ENCODE measurements at regions of chr4 and their contacts with region 1.

Region 1: DNA sequence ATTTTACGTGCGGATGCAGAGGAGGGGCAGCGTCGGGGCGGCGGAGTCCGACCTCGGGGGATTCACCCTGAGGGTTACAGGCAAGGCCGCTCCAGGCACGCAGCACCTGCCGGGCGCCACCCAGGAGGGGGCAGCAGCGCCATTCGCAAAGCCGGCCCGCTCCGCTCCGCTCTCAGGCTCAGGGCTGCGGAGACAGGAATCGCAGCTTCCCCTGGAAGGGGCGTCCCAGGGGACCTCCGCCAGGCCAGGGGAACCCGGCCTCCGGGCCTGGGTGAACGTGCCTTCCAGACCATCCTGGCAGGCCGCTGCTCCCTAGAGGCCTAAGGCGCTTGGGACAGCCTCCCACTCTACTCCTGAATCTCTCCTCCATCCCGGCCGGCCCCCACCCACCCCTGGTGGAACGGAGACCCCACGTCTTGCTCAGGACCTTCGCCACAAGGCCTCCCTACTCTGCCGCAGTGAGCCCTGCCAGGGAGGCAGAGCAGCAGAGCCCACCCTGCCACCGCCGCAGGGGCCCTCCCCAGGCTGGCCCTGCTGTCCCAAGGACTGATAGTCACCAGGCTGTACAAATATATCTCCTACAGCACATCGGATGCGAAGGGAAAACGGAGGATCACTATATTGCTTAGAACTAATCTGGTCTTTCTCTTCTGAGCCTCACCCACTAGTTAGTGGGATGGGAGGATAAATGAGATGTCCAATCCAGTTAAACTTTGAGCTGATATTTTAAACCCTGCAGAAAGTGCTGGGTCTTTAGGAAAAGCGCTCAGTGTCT is 115.0 kb downstream of the SMIM20 start:
- DNase-seq: peak; percentile 74 to 91
- H3K4me3 ChIP-seq: peak overlapping the region; percentile 44 to 63 (median 52)
- H3K27ac ChIP-seq: peak overlapping the region; percentile 95
- H3K4me1 ChIP-seq: peaks cover 9 to 32% (median 20%) of the 10 kb centered on the region in 4 experiments
- H3K27me3 ChIP-seq: no peaks in the 10 kb centered on the region
- CTCF ChIP-seq: peak; percentile 74 to 88 (median 85)
- EP300 ChIP-seq: peak in 1 of 2 experiments; percentile 18; a peak in 1 of 3 replicates
- POLR2A ChIP-seq: peak; percentile 39 to 98
- RAD21 ChIP-seq: peak; percentile 90 to 92

Region 2: GRCh38 chr4:25783943-25784342 is 245.0 kb before region 1 on chr4:
- CTCF ChIA-PET with region 1: no interaction called
- POLR2A ChIA-PET with region 1: no interaction called
- DNase-seq: no peak
- H3K4me3 ChIP-seq: no peak overlapping the region
- H3K27ac ChIP-seq: no peak overlapping the region
- H3K4me1 ChIP-seq: no peaks in the 10 kb centered on the region
- H3K27me3 ChIP-seq: no peaks in the 10 kb centered on the region
- CTCF ChIP-seq: no peak
- EP300 ChIP-seq: no peak
- POLR2A ChIP-seq: no peak
- RAD21 ChIP-seq: no peak

Region 3: DNA sequence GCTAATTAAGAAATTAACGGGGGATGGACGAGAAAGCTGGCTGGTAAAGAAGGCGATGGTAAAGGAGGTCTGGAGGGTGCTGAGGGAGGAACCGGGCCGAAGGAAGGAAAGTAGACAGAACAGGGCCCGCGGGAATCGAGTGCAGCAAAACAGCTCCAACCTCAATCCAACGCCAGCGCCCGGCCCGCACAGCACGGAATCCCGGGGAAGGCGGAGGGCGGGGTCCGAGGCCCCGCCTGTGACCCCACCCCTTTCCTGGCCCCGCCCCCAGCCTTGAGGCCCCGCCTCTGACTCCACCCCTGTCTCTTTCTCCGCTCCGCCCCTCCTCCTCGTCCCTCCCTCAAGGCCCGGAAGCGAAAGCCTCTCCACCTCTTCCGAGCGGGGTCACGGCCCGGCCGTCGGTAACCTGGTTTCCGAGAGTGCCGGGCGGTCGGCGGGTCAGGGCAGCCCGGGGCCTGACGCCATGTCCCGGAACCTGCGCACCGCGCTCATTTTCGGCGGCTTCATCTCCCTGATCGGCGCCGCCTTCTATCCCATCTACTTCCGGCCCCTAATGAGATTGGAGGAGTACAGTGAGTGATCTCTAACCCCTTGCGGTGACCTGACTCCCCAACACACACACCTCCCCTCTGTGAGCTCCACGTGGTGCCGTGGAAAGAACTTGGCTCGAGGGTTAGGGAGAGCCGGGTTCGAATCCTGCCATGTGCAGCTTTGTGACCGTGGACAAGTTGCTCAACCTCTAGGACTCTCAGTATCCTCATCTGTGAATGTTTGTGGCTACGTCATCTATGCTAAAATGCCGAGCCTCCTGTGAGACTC is 114.9 kb before region 1 on chr4 and contains the start of gene SMIM20:
- CTCF ChIA-PET with region 1: no interaction called
- POLR2A ChIA-PET with region 1: interaction called, 11 read pairs
- DNase-seq: peak; percentile 61 to 93
- H3K4me3 ChIP-seq: peak within 1 kb of the TSS; percentile 75 to 89 (median 82)
- H3K27ac ChIP-seq: peak within 1 kb of the TSS; percentile 83
- H3K4me1 ChIP-seq: peaks cover 3 to 7% (median 5%) of the 10 kb centered on the region in 4 experiments; a peak in 6 of 7 replicates
- H3K27me3 ChIP-seq: peaks cover 0 to 8% (median 4%) of the 10 kb centered on the region in 4 experiments; a peak in 3 of 7 replicates
- CTCF ChIP-seq: no peak
- EP300 ChIP-seq: no peak
- POLR2A ChIP-seq: peak; percentile 87 to 94
- RAD21 ChIP-seq: no peak
- total RNA-seq, gene SMIM20: 30.9 and 36.9 TPM in 2 replicates

Region 4: DNA sequence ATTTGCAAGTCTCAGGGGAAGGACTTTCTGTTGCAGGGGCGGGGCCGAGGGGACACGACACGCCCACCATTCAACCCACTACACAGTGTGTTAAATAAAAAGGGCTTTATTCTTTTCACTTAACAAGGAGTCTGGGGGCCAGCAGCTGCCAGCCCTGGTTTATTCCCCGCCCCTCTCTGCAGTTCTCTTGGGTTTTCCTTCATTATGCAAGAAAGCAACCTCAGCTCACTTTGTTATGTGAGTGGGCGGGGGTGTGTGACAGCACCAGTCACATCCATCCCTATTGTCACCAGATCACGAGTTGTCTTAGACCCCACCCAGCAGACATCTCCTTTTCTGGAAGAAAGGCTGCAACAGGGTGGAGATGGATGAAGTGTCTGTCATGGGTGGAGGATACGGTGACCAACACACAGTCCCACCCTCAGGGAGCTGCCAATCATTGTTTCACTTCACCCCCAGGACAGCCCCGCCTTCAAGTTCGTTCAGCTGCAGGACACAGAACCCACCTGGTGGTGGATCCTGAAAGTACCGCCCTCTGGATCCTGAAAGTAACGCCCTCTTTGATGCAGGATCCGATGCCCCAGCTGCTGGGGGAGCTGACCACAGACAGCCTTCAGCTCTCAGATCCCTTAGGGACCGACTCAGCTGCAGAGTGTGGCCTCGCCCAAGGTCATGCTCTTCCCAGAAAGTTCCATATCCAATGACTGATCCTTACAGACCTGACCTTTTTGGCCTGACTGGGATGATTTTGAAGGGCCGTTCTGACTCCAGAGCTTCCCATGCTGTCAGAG is 35.4 kb before region 1 on chr4:
- CTCF ChIA-PET with region 1: interaction called, 25 read pairs
- POLR2A ChIA-PET with region 1: interaction called, 29 read pairs
- DNase-seq: peak; percentile 93 to 97
- H3K4me3 ChIP-seq: peak overlapping the region in 2 of 4 experiments; percentile 1 to 45; a peak in 3 of 8 replicates
- H3K27ac ChIP-seq: peak overlapping the region; percentile 46; the same call in 1 of the 2 replicates
- H3K4me1 ChIP-seq: peaks cover 0 to 5% (median 3%) of the 10 kb centered on the region in 4 experiments; a peak in 3 of 7 replicates
- H3K27me3 ChIP-seq: no peaks in the 10 kb centered on the region
- CTCF ChIP-seq: peak; percentile 70 to 83 (median 78)
- EP300 ChIP-seq: peak in 1 of 2 experiments; percentile 22; a peak in 1 of 3 replicates
- POLR2A ChIP-seq: peak in 1 of 2 experiments; percentile 10; a peak in 1 of 3 replicates
- RAD21 ChIP-seq: peak; percentile 61 to 70

Region 5: GRCh38 chr4:26069218-26069617 is 40.2 kb after region 1 on chr4:
- CTCF ChIA-PET with region 1: interaction called, 12 read pairs
- POLR2A ChIA-PET with region 1: interaction called, 8 read pairs
- DNase-seq: peak in 1 of 2 experiments; percentile 52
- H3K4me3 ChIP-seq: no peak overlapping the region
- H3K27ac ChIP-seq: no peak overlapping the region
- H3K4me1 ChIP-seq: no peaks in the 10 kb centered on the region
- H3K27me3 ChIP-seq: no peaks in the 10 kb centered on the region
- CTCF ChIP-seq: peak; percentile 39 to 79 (median 73)
- EP300 ChIP-seq: no peak
- POLR2A ChIP-seq: no peak
- RAD21 ChIP-seq: peak; percentile 73 to 84

Region 6: GRCh38 chr4:26404743-26405206 is 375.8 kb after region 1 on chr4:
- CTCF ChIA-PET with region 1: interaction called, 7 read pairs
- POLR2A ChIA-PET with region 1: interaction called, 14 read pairs
- DNase-seq: no peak
- H3K4me3 ChIP-seq: no peak overlapping the region
- H3K27ac ChIP-seq: no peak overlapping the region
- H3K4me1 ChIP-seq: peaks cover 0 to 10% (median 4%) of the 10 kb centered on the region in 4 experiments; a peak in 4 of 7 replicates
- H3K27me3 ChIP-seq: no peaks in the 10 kb centered on the region
- CTCF ChIP-seq: peak in 2 of 3 experiments; percentile 9 to 12; a peak in 1 of 4 replicates
- EP300 ChIP-seq: no peak
- POLR2A ChIP-seq: no peak
- RAD21 ChIP-seq: peak in 1 of 2 experiments; percentile 14; a peak in 1 of 4 replicates

Measured in H1 (cell line).